Colonic mucosa (tissue), 4 donors: ENCODE measurements at regions of chr14 and their contacts with region 1.

Region 1: GRCh38 chr14:64823305-64823861 is 56.3 kb downstream of the SPTB start:
- DNase-seq: peak; percentile 72
- H3K4me3 ChIP-seq: no peak overlapping the region
- H3K27ac ChIP-seq: no peak overlapping the region
- H3K4me1 ChIP-seq: peaks cover 3% of the 10 kb centered on the region
- H3K27me3 ChIP-seq: no peaks in the 10 kb centered on the region
- CTCF ChIP-seq: peak; percentile 73

Region 2: GRCh38 chr14:64369201-64369600 is 454.2 kb before region 1 on chr14:
- intact Hi-C with region 1: no loop called
- DNase-seq: no peak
- H3K4me3 ChIP-seq: no peak overlapping the region
- H3K27ac ChIP-seq: no peak overlapping the region
- H3K4me1 ChIP-seq: no peaks in the 10 kb centered on the region
- H3K27me3 ChIP-seq: no peaks in the 10 kb centered on the region
- CTCF ChIP-seq: no peak

Region 3: DNA sequence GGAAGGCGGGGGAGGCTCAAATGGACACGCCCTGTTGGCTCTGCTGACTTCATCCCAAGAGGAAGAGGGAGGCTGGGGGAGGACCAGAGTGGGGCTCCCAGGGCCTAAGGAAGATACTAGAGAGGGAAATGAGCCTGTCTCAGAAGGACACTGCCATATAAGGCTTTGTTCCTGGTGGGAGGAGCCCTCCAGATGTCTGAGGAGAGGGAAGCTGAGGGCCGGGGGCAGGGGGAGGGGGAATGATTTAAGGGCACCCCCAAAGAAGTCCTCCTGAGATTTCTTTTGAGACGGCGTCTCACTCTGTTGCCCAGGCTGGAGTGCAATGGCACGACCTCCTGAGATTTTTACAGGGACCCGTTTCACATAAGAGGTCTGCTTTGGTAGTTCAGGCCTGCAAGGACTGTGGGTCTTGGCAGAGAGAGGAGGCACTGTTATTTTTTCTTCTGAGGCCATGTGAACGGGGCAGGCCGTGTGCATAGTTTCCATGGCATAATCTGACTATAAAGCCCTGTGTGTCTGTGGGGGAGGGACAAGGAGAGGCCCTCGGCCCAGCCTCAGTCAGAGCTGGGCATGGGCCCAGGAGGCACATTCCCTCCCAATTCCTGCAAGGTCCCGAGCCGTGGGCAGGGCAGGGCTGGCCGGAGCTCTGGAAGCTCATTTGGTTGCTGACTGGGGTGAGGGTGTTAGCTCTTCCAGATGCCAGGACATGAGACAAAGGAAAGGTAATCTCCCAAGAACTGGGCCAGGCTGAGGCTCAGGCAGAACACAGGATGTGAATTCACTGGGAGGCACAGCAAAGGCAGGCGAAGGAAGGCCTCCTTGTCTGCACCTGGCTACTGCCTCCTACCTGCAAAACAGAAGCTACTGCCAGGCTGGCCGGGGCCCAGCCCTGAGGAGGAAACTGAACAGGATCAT is 141.3 kb before region 1 on chr14:
- intact Hi-C with region 1: no loop called
- DNase-seq: peak; percentile 67
- H3K4me3 ChIP-seq: no peak overlapping the region
- H3K27ac ChIP-seq: peak overlapping the region; percentile 55
- H3K4me1 ChIP-seq: no peaks in the 10 kb centered on the region
- H3K27me3 ChIP-seq: no peaks in the 10 kb centered on the region
- CTCF ChIP-seq: no peak

Region 4: GRCh38 chr14:64891839-64892375 is 68.5 kb after region 1 on chr14:
- intact Hi-C with region 1: loop called (anchors 5 kb)
- DNase-seq: peak; percentile 46
- H3K4me3 ChIP-seq: no peak overlapping the region
- H3K27ac ChIP-seq: no peak overlapping the region
- H3K4me1 ChIP-seq: no peaks in the 10 kb centered on the region
- H3K27me3 ChIP-seq: no peaks in the 10 kb centered on the region
- CTCF ChIP-seq: peak; percentile 47

Region 5: DNA sequence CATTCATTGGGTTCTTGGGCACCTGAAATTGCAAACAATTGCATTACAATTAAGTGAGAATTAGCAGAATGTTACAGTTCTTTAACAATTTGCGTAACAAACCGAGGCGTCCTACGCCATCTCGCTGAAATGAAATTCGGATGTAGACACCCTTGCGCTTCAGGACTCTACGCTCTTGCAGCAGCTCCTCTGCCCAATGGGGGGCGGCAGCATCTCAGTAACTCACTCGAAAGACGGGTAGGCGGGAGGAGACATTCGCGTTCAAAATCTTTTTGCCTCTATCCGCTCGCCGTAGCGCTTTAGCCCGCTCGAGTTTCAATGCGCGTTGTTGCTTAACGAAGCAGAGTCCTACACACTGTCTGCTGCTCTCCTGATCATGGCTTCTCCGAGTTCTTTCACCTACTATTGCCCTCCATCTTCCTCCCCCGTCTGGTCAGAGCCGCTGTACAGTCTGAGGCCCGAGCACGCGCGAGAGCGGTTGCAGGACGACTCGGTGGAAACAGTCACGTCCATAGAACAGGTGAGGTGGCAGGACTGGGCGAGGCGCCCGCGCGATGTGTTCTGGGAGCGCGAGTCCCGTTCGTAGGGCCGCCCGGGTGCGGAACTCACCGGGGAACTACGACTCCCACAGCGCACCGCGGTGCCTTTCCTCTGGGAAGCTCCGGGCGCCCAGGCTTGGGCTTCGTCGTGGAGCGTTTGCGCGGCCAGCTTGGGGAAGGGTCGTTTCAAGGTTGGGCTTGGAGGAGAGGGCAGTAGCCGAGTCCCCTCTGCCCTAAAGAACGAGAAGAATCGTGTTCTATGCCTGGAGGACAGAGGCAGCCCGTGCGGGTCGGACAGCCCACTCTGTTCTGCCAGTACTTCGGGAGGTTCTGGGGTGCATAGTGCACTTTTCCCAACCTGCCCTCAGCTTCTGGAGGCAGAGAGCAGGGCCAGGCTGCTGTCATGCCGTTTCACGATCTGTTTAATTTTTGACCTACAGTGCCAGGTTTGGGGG is 163.5 kb after region 1 on chr14 and contains the start of gene FNTB:
- intact Hi-C with region 1: loop called (anchors 5 kb)
- DNase-seq: peak; percentile 97
- H3K4me3 ChIP-seq: peak within 1 kb of the TSS; percentile 79
- H3K27ac ChIP-seq: peak within 1 kb of the TSS; percentile 78
- H3K4me1 ChIP-seq: peaks cover 9% of the 10 kb centered on the region
- H3K27me3 ChIP-seq: no peaks in the 10 kb centered on the region
- CTCF ChIP-seq: peak; percentile 77
- total RNA-seq, gene FNTB: 12.1 to 20.7 TPM